Sigmoid colon (tissue), 7 donors: ENCODE measurements at regions of chr12 and their contacts with region 1.

Region 1: GRCh38 chr12:105053116-105053572 is 31.1 kb downstream of the ALDH1L2 start:
- DNase-seq: peak; percentile 84
- H3K4me3 ChIP-seq: no peak overlapping the region
- H3K27ac ChIP-seq: no peak overlapping the region
- H3K4me1 ChIP-seq: peaks cover 0 to 6% (median 0%) of the 10 kb centered on the region in 4 donors
- H3K27me3 ChIP-seq: no peaks in the 10 kb centered on the region
- CTCF ChIP-seq: peak; percentile 73 to 91 (median 80)
- EP300 ChIP-seq: no peak
- POLR2A ChIP-seq: no peak

Region 2: GRCh38 chr12:104381731-104382480 is 671.2 kb before region 1 on chr12:
- intact Hi-C with region 1: loop called (anchors 5 kb)
- DNase-seq: peak; percentile 87
- H3K4me3 ChIP-seq: no peak overlapping the region
- H3K27ac ChIP-seq: no peak overlapping the region
- H3K4me1 ChIP-seq: peaks cover 0 to 12% (median 4%) of the 10 kb centered on the region in 4 donors
- H3K27me3 ChIP-seq: no peaks in the 10 kb centered on the region
- CTCF ChIP-seq: peak; percentile 83 to 95 (median 94)
- EP300 ChIP-seq: no peak
- POLR2A ChIP-seq: no peak

Region 3: DNA sequence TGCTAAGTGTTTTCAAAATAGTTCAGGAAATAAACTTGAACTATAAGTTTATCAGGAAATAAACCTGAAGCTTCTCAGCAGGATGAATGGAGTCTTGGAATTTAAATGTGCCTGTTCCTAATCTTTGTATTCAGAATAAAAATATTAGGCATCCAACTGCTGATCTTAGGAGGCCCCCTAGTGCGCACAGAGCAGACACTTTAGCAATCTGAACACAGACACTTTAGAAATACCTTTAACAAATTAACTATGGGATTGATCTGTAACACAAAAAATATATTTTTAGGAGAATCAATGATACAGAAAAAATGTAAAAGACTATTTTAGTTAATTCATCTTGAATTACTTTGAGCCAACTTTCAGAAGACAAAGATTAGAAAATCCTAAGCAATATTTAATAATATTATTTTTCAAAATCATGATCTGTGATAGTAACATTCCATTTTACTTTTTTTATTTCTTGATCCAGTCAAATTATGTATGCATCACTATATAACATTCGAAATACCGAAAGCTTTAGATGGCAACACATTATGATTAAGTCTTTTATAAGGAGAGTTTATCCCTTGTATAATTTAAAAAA is 175.9 kb before region 1 on chr12:
- intact Hi-C with region 1: loop called (anchors 2 kb)
- DNase-seq: no peak
- H3K4me3 ChIP-seq: no peak overlapping the region
- H3K27ac ChIP-seq: no peak overlapping the region
- H3K4me1 ChIP-seq: peaks cover 0 to 12% (median 7%) of the 10 kb centered on the region in 4 donors
- H3K27me3 ChIP-seq: no peaks in the 10 kb centered on the region
- CTCF ChIP-seq: peak; percentile 50 to 68 (median 62)
- EP300 ChIP-seq: no peak
- POLR2A ChIP-seq: no peak